ENCODE measurements at regions of chr15 and their contacts with region 1.

Region 1: GRCh38 chr15:92322566-92323355 is 70.9 kb upstream of the ST8SIA2 start:
- DNase-seq: no peak
- ATAC-seq: no peak
- H3K4me3 Mint-ChIP-seq: no peak overlapping the region
- H3K27ac Mint-ChIP-seq: no peak overlapping the region
- H3K4me1 Mint-ChIP-seq: no peaks in the 10 kb centered on the region
- H3K27me3 Mint-ChIP-seq: no peaks in the 10 kb centered on the region
- CTCF ChIP-seq: no peak

Region 2: GRCh38 chr15:91710067-91710698 is 612.6 kb before region 1 on chr15:
- CTCF ChIA-PET with region 1: no interaction called
- POLR2A ChIA-PET with region 1: no interaction called
- intact Hi-C with region 1: no loop called
- DNase-seq: no peak
- ATAC-seq: no peak
- H3K4me3 Mint-ChIP-seq: no peak overlapping the region
- H3K27ac Mint-ChIP-seq: no peak overlapping the region
- H3K4me1 Mint-ChIP-seq: no peaks in the 10 kb centered on the region
- H3K27me3 Mint-ChIP-seq: peaks cover 5% of the 10 kb centered on the region
- CTCF ChIP-seq: no peak

Region 3: GRCh38 chr15:91782221-91782620 is 540.5 kb before region 1 on chr15:
- CTCF ChIA-PET with region 1: no interaction called
- POLR2A ChIA-PET with region 1: no interaction called
- intact Hi-C with region 1: no loop called
- DNase-seq: no peak
- ATAC-seq: no peak
- H3K4me3 Mint-ChIP-seq: no peak overlapping the region
- H3K27ac Mint-ChIP-seq: no peak overlapping the region
- H3K4me1 Mint-ChIP-seq: no peaks in the 10 kb centered on the region
- H3K27me3 Mint-ChIP-seq: peaks cover 5% of the 10 kb centered on the region
- CTCF ChIP-seq: no peak

Region 4: DNA sequence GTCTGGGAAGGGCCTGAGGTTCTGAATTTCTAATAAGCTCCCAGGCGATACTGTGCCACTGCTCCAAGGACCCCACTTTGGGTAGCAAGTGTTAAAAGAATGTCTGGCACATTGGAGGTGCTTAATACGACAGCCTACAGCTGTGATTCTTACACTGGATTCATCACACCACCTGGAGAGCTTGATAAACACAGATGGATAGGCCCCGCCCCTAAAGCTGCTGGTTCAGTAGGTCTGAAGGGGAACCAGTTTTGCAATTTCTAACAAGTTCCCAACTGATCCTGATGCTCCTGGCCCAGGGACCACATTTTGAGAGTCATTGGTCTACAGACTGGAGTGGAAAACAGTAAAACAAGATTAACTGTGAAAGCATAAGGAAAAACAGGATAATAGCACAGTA is 53.9 kb before region 1 on chr15:
- CTCF ChIA-PET with region 1: no interaction called
- POLR2A ChIA-PET with region 1: no interaction called
- intact Hi-C with region 1: loop called (anchors 10 kb)
- DNase-seq: no peak
- ATAC-seq: no peak
- H3K4me3 Mint-ChIP-seq: no peak overlapping the region
- H3K27ac Mint-ChIP-seq: no peak overlapping the region
- H3K4me1 Mint-ChIP-seq: no peaks in the 10 kb centered on the region
- H3K27me3 Mint-ChIP-seq: peaks cover 5% of the 10 kb centered on the region
- CTCF ChIP-seq: no peak

Region 5: GRCh38 chr15:92336419-92336987 is 13.7 kb after region 1 on chr15:
- CTCF ChIA-PET with region 1: no interaction called
- POLR2A ChIA-PET with region 1: no interaction called
- intact Hi-C with region 1: no loop called
- DNase-seq: no peak
- ATAC-seq: no peak
- H3K4me3 Mint-ChIP-seq: no peak overlapping the region
- H3K27ac Mint-ChIP-seq: no peak overlapping the region
- H3K4me1 Mint-ChIP-seq: no peaks in the 10 kb centered on the region
- H3K27me3 Mint-ChIP-seq: no peaks in the 10 kb centered on the region
- CTCF ChIP-seq: no peak